PC-9 (cell line): ENCODE measurements at regions of chr11 and their contacts with region 1.

Region 1: DNA sequence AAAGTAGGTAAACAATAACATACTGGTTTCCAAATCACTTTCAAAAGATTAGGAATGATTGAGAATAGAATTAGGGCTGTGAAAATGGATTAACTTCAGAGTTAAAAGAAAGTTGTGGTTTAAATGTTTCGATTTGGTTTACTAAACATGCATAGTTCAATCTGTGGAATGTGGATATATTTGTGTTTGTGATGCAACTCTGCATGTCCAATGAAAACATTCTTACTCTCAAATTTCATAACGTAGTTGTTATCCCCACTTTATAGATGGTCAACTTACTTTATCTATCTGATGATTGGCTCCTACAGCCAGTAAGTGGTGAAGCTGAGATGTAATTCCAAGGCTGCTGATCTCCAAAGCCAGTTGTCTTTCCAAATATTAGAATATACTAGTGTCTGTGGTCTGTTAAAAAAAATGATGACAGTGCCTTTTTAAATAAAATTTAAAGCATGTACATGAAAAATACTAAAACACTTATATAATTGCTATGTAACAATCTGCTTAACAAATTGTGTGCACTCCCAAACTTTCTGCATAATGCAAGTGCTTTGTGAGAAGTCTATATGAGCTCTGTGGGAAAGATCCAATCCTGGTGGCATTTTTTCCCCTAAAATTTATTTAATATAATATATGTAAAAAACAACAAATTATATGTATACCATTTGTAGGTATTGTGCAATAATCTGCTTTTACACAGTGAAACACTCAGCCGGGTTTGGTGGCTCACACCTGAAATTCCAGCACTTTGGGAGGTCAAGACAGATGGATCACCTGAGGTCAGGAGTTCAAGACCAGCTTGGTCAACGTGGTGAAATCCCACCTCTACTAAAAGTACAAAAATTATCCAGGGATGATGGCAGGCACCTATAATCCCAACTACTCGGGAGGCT is 9.7 kb upstream of the SIK3 start:
- DNase-seq: peak in 1 of 2 experiments; percentile 72
- H3K4me3 ChIP-seq: no peak overlapping the region
- H3K27ac ChIP-seq: no peak overlapping the region
- H3K4me1 ChIP-seq: 0 out of 2 replicates have a peak, but pooled peaks cover 11% of the 10 kb centered on the region
- H3K27me3 ChIP-seq: no peaks in the 10 kb centered on the region
- CTCF ChIP-seq: no peak

Region 2: DNA sequence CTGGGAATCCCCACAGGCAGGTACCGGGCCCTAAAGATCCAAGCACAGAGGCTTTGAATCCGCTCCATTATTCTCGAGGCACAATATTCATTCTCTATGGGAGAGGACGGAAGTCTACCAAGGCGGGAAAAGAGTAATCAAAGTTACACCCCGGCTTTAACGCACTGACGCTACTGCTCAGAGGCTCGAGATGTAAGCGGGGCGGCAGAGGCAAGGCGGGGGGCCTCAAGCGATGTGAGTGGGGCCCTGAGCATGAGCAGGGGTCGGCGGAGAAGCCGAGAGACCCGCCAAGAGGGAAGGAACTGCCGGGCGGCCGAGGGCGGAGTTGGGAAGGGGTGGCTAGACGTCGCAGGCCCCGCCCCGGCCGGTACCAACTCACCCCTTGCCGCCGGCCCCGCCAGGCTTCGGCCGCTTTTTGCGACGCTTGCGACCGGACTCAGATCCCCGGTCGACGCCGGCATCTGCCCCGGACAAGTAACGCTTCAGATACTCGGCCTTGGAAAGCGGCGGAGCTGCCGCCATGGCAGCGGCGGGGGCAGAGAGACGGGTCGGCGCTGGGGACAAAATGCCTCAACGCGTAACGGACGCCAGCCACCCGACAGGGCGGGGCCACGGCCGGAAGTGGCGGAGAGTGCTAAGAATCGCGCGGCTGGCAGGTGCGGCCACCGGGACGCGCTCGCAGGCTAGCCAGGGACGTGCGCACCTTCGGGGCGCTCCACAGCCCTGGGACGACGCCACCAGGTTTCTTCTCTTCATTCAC is 335.3 kb before region 1 on chr11 and contains the start of gene BUD13:
- CTCF ChIA-PET with region 1: interaction called, 3 read pairs
- POLR2A ChIA-PET with region 1: no interaction called
- intact Hi-C with region 1: loop called (anchors 5 kb)
- DNase-seq: peak; percentile 76 to 90
- H3K4me3 ChIP-seq: peak within 1 kb of the TSS; percentile 91
- H3K27ac ChIP-seq: peak within 1 kb of the TSS; percentile 69
- H3K4me1 ChIP-seq: peaks cover 32% of the 10 kb centered on the region
- H3K27me3 ChIP-seq: no peaks in the 10 kb centered on the region
- CTCF ChIP-seq: no peak
- total RNA-seq, gene BUD13: 13.5 and 16.4 TPM in 2 replicates

Region 3: DNA sequence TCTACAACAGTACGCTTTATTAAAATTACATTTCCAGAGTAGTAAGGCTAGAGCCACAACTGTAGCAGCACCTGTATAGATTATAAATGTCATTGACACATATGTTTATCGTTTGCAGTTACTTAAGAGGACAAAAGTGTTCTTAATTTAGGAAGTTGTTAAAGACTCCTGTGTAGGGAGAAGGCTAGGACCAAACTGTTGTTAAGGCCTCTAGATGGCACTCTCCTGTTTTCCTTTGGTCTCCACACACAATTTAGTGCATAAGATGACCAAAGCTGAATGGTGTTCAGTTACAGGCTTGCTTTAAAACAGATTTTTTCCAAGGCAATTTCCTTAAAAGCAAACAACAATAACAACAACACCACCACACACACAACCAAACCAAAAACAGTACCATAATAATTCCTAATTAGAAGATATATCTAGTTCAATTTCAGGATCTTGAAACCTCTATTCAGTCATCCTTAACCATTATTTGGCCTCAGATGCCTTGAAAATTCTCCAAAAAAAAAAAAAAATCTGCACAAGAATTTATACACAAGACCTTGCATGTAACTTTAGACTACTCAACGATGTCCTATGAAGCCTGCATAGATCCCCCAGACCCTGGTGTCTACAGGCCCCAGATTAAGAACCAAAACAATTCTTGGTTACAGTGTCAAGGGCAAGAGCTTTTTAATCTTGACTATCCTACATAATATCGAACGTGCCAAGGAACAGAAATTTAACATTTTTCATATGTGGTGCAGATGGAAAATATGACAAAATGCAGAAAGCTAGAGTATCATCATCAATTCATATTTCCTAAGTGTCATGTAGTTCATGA is 227.9 kb before region 1 on chr11:
- CTCF ChIA-PET with region 1: interaction called, 5 read pairs
- POLR2A ChIA-PET with region 1: no interaction called
- intact Hi-C with region 1: loop called (anchors 2 kb)
- DNase-seq: peak; percentile 8 to 65
- H3K4me3 ChIP-seq: no peak overlapping the region
- H3K27ac ChIP-seq: no peak overlapping the region
- H3K4me1 ChIP-seq: 0 out of 2 replicates have a peak, but pooled peaks cover 4% of the 10 kb centered on the region
- H3K27me3 ChIP-seq: no peaks in the 10 kb centered on the region
- CTCF ChIP-seq: peak; percentile 86

Region 4: GRCh38 chr11:117143871-117144476 is 36.0 kb after region 1 on chr11 and contains the start of gene PAFAH1B2:
- CTCF ChIA-PET with region 1: interaction called, 13 read pairs
- POLR2A ChIA-PET with region 1: interaction called, 5 read pairs
- intact Hi-C with region 1: no loop called
- DNase-seq: peak; percentile 88 to 92
- H3K4me3 ChIP-seq: peak within 1 kb of the TSS; percentile 85
- H3K27ac ChIP-seq: peak within 1 kb of the TSS; percentile 44
- H3K4me1 ChIP-seq: peaks cover 13% of the 10 kb centered on the region
- H3K27me3 ChIP-seq: no peaks in the 10 kb centered on the region
- CTCF ChIP-seq: no peak
- total RNA-seq, gene PAFAH1B2: 83.7 and 91.3 TPM in 2 replicates

Region 5: GRCh38 chr11:117171404-117172061 is 63.6 kb after region 1 on chr11:
- CTCF ChIA-PET with region 1: no interaction called
- POLR2A ChIA-PET with region 1: no interaction called
- intact Hi-C with region 1: no loop called
- DNase-seq: no peak
- H3K4me3 ChIP-seq: no peak overlapping the region
- H3K27ac ChIP-seq: no peak overlapping the region
- H3K4me1 ChIP-seq: no peaks in the 10 kb centered on the region
- H3K27me3 ChIP-seq: no peaks in the 10 kb centered on the region
- CTCF ChIP-seq: no peak

Region 6: DNA sequence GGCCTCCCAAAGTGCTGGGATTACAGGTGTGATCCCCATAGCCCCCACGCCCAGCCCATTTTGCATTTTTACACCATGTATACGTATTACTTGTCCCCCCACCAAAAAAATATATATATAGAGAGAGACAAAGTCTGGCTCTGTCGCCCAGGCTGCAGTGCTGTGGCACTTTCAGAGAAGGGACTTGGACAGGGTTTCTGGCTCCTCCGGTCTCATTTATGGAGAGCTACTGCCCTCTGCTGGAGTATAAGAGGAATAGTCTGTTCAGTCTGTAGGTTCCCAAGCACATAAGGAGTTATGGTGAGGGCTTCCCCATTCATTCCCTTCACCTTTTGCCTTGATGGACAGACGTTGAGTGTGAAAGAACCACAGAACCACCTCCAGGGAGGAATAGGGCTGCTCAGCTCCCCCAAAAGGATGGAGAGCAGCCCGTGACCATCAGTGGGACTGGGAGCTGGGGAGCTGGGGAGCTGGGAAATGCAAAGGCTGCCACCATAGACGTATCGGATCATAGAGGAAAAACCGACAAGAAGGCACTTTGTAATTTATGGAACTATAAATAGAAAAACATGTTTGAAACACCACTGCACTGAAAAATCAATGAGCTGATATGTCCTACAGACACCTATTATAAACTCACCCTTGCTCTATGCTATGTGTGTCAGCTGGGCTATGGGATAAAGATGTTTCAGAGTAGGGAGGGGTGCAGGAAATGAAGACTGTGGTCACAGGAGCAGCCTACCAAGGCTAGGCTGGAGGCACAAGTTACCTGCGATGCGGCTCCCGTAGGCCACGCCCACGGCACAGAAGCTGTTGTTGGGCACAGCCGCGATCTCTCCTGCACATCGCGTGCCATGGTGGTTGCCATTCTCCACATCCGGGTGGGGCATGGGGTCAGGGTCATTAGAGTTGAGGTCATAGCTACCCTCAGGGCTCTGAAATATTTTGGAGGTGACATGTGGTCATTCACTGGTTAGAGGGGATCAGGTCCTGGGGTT is 118.7 kb after region 1 on chr11:
- CTCF ChIA-PET with region 1: no interaction called
- POLR2A ChIA-PET with region 1: no interaction called
- intact Hi-C with region 1: loop called (anchors 2 kb)
- DNase-seq: peak; percentile 39 to 73
- H3K4me3 ChIP-seq: no peak overlapping the region
- H3K27ac ChIP-seq: no peak overlapping the region
- H3K4me1 ChIP-seq: peaks cover 21% of the 10 kb centered on the region
- H3K27me3 ChIP-seq: no peaks in the 10 kb centered on the region
- CTCF ChIP-seq: peak; percentile 93